Activated T-helper 2 cell treated with anti-CD3 and anti-CD28 coated beads, Interferon-gamma antibody, Interleukin-2, Interleukin-4, amounts not matched to agents 10 μg/mL and 5 μg/mL and 100 μg/mL, durations not matched to agents 14 hours and 24 hours and 36 hours (primary cell): ENCODE measurements at regions of chr11 and their contacts with region 1.

Region 1: DNA sequence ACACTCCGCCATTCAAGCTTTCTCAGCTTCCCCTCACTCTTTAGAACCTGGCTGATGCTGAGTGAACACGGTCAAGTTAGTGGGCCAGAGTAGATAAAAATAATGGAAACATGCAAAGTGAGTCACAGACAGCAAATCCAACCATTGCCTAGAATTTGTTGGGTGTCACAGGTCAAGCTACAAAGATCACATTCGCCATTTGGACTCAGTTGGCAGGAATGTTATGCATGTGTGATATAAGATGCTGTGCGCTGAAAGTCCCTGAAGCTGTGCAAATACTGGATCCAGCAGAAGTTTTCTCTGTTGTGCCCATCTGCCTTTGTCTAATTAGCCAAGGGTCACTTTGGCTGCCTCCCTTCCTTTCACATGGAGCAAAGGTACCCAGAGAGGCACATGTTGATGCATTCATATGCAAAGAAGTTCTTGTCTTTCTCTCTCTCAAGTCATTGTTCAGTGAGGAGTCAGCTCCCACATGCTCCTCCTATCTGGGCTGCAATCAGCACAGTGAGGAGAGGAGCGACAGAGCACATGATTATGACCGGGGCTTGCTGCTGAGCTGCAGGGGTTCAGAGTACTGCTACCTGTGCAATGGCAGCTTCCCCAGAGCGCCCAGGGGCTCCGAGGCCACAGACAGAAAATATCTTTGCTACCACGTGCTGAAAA is 39.7 kb downstream of the FLI1 start:
- DNase-seq: no peak
- H3K4me3 Mint-ChIP-seq: peak overlapping the region; percentile 72
- H3K27ac Mint-ChIP-seq: peak overlapping the region; percentile 90
- H3K4me1 Mint-ChIP-seq: peaks cover 87% of the 10 kb centered on the region
- H3K27me3 Mint-ChIP-seq: no peaks in the 10 kb centered on the region

Region 2: GRCh38 chr11:128643661-128644317 is 89.8 kb before region 1 on chr11:
- intact Hi-C with region 1: no loop called
- DNase-seq: no peak
- H3K4me3 Mint-ChIP-seq: no peak overlapping the region
- H3K27ac Mint-ChIP-seq: no peak overlapping the region
- H3K4me1 Mint-ChIP-seq: peaks cover 18% of the 10 kb centered on the region
- H3K27me3 Mint-ChIP-seq: peaks cover 24% of the 10 kb centered on the region

Region 3: GRCh38 chr11:128720522-128720985 is 13.0 kb before region 1 on chr11:
- intact Hi-C with region 1: loop called (anchors 1 kb)
- DNase-seq: no peak
- H3K4me3 Mint-ChIP-seq: peak overlapping the region; percentile 74
- H3K27ac Mint-ChIP-seq: peak overlapping the region; percentile 81
- H3K4me1 Mint-ChIP-seq: peaks cover 92% of the 10 kb centered on the region
- H3K27me3 Mint-ChIP-seq: no peaks in the 10 kb centered on the region

Region 4: DNA sequence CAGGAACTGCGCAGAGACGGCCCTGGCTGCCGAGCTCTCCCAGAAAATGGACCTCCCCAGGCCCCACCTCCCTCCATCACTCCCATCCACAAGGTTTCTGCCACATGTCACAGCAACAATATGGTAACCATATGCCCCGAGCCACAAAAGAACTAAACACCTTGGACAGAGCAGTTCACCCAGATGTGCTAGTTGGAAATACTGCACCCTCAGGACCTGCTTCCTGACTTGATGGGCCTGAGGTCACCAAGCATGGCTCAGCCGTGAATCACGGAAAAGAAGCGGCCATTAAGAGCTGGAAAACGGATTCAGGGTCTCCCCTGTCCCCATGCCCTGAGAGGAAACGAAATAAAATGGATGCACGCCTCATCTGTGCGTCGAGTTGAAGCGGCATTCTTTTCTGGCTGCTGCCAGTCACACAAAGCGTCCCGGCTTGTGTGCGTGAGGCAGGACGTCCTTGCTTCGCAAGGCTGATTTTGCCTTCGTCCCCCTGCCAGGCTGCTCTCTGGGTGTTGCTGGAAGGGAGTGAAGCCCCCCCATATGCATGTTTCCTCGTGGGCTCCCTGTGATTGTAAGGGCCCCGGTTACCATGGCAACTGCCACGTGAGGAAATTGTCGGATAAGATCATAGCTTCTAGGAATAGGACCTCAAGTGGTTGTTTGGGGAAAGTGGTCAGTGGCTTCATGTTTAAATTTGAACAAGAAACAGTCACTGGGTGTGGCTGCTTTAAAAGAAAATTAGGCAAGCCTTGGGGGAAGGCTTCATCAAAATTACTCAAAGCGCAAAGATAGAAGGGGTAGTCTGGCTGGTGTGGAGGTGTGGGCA is 12.0 kb after region 1 on chr11:
- intact Hi-C with region 1: loop called (anchors 1 kb)
- DNase-seq: no peak
- H3K4me3 Mint-ChIP-seq: no peak overlapping the region
- H3K27ac Mint-ChIP-seq: no peak overlapping the region
- H3K4me1 Mint-ChIP-seq: peaks cover 48% of the 10 kb centered on the region
- H3K27me3 Mint-ChIP-seq: no peaks in the 10 kb centered on the region

Region 5: GRCh38 chr11:128772814-128773213 is 39.2 kb after region 1 on chr11:
- intact Hi-C with region 1: no loop called
- DNase-seq: no peak
- H3K4me3 Mint-ChIP-seq: no peak overlapping the region
- H3K27ac Mint-ChIP-seq: no peak overlapping the region
- H3K4me1 Mint-ChIP-seq: peaks cover 12% of the 10 kb centered on the region
- H3K27me3 Mint-ChIP-seq: no peaks in the 10 kb centered on the region